B cell (primary cell): ENCODE measurements at regions of chr17 and their contacts with region 1.

Region 1: GRCh38 chr17:2416010-2416734 is 15.3 kb upstream of the MNT start:
- DNase-seq: peak; percentile 89
- ATAC-seq: peak; percentile 84
- H3K4me3 ChIP-seq: no peak overlapping the region
- H3K4me3 Mint-ChIP-seq: no peak overlapping the region
- H3K27ac ChIP-seq: no peak overlapping the region
- H3K27ac Mint-ChIP-seq: peak overlapping the region; percentile 46
- H3K4me1 ChIP-seq: no peaks in the 10 kb centered on the region
- H3K4me1 Mint-ChIP-seq: peaks cover 1% of the 10 kb centered on the region
- H3K27me3 ChIP-seq: no peaks in the 10 kb centered on the region
- H3K27me3 Mint-ChIP-seq: no peaks in the 10 kb centered on the region
- CTCF ChIP-seq: peak; percentile 99

Region 2: GRCh38 chr17:2336215-2336851 is 79.8 kb before region 1 on chr17 and contains the start of gene TSR1:
- CTCF ChIA-PET with region 1: interaction called, 21 read pairs
- POLR2A ChIA-PET with region 1: interaction called, 3 read pairs
- intact Hi-C with region 1: no loop called
- DNase-seq: peak; percentile 90
- ATAC-seq: peak; percentile 81
- H3K4me3 ChIP-seq: peak within 1 kb of the TSS; percentile 77 to 87 (median 82)
- H3K4me3 Mint-ChIP-seq: peak within 1 kb of the TSS; percentile 100
- H3K27ac ChIP-seq: peak within 1 kb of the TSS in 1 of 2 donors; percentile 64
- H3K27ac Mint-ChIP-seq: peak within 1 kb of the TSS; percentile 95
- H3K4me1 ChIP-seq: peaks cover 9 to 25% of the 10 kb centered on the region in 2 donors
- H3K4me1 Mint-ChIP-seq: peaks cover 24% of the 10 kb centered on the region
- H3K27me3 ChIP-seq: no peaks in the 10 kb centered on the region
- H3K27me3 Mint-ChIP-seq: no peaks in the 10 kb centered on the region
- CTCF ChIP-seq: no peak
- total RNA-seq, gene TSR1: 29.8 and 31.5 TPM in 2 replicates

Region 3: GRCh38 chr17:2386400-2387085 is 29.6 kb before region 1 on chr17:
- CTCF ChIA-PET with region 1: interaction called, 650 read pairs
- POLR2A ChIA-PET with region 1: interaction called, 12 read pairs
- intact Hi-C with region 1: no loop called
- DNase-seq: no peak
- ATAC-seq: no peak
- H3K4me3 ChIP-seq: no peak overlapping the region
- H3K4me3 Mint-ChIP-seq: no peak overlapping the region
- H3K27ac ChIP-seq: no peak overlapping the region
- H3K27ac Mint-ChIP-seq: no peak overlapping the region
- H3K4me1 ChIP-seq: peaks cover 14 to 21% of the 10 kb centered on the region in 2 donors
- H3K4me1 Mint-ChIP-seq: peaks cover 18% of the 10 kb centered on the region
- H3K27me3 ChIP-seq: no peaks in the 10 kb centered on the region
- H3K27me3 Mint-ChIP-seq: no peaks in the 10 kb centered on the region
- CTCF ChIP-seq: no peak

Region 4: GRCh38 chr17:2401426-2402221 is 14.5 kb before region 1 on chr17:
- CTCF ChIA-PET with region 1: interaction called, 76 read pairs
- POLR2A ChIA-PET with region 1: interaction called, 3 read pairs
- intact Hi-C with region 1: loop called (anchors 1 kb)
- DNase-seq: peak; percentile 96
- ATAC-seq: peak; percentile 57
- H3K4me3 ChIP-seq: peak overlapping the region; percentile 64 to 99 (median 94)
- H3K4me3 Mint-ChIP-seq: peak overlapping the region; percentile 99
- H3K27ac ChIP-seq: peak overlapping the region; percentile 95 to 98
- H3K27ac Mint-ChIP-seq: peak overlapping the region; percentile 99
- H3K4me1 ChIP-seq: peaks cover 32 to 36% of the 10 kb centered on the region in 2 donors
- H3K4me1 Mint-ChIP-seq: peaks cover 38% of the 10 kb centered on the region
- H3K27me3 ChIP-seq: no peaks in the 10 kb centered on the region
- H3K27me3 Mint-ChIP-seq: no peaks in the 10 kb centered on the region
- CTCF ChIP-seq: no peak

Region 5: DNA sequence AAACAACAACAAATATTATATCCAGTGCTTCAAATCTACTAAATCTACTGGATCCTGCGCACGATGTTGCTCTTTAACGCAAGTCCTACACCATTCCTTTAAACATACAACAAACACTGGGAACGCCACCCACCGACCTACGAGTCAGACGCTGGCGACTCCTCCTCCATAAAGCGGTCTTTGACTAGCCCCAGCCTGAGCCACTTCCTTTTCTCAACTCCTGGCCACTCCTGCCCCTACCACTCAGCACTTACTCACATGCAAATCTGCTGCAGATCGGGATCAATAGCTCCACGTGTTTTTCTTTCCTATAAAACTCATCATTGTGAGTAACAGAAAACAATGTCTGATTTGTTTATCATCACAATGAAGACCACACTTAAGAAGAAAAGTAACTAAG is 17.5 kb after region 1 on chr17:
- CTCF ChIA-PET with region 1: interaction called, 11 read pairs
- POLR2A ChIA-PET with region 1: no interaction called
- intact Hi-C with region 1: no loop called
- DNase-seq: no peak
- ATAC-seq: no peak
- H3K4me3 ChIP-seq: no peak overlapping the region
- H3K4me3 Mint-ChIP-seq: no peak overlapping the region
- H3K27ac ChIP-seq: no peak overlapping the region
- H3K27ac Mint-ChIP-seq: no peak overlapping the region
- H3K4me1 ChIP-seq: no peaks in the 10 kb centered on the region
- H3K4me1 Mint-ChIP-seq: no peaks in the 10 kb centered on the region
- H3K27me3 ChIP-seq: no peaks in the 10 kb centered on the region
- H3K27me3 Mint-ChIP-seq: no peaks in the 10 kb centered on the region
- CTCF ChIP-seq: no peak

Region 6: DNA sequence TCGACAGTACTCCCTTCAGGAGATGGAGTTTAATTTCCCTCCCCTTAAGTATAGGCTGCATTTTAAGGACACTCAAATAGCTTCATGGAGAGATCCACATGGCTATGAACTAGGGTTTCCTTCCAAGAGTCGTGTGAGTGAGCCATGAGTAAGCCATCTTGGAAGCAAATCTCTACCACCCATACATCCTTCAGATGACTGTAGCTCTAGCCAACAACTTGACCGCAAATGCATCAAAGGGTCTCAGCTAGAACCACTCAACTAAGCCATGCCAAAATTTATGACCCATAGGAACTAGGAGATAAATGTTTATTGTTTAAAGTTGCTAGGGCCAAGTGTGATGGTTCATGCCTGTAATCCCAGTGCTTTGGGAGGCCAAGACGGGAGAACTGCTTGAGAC is 52.1 kb after region 1 on chr17:
- CTCF ChIA-PET with region 1: no interaction called
- POLR2A ChIA-PET with region 1: no interaction called
- intact Hi-C with region 1: no loop called
- DNase-seq: no peak
- ATAC-seq: no peak
- H3K4me3 ChIP-seq: no peak overlapping the region
- H3K4me3 Mint-ChIP-seq: no peak overlapping the region
- H3K27ac ChIP-seq: no peak overlapping the region
- H3K27ac Mint-ChIP-seq: no peak overlapping the region
- H3K4me1 ChIP-seq: no peaks in the 10 kb centered on the region
- H3K4me1 Mint-ChIP-seq: no peaks in the 10 kb centered on the region
- H3K27me3 ChIP-seq: no peaks in the 10 kb centered on the region
- H3K27me3 Mint-ChIP-seq: no peaks in the 10 kb centered on the region
- CTCF ChIP-seq: no peak

Region 7: DNA sequence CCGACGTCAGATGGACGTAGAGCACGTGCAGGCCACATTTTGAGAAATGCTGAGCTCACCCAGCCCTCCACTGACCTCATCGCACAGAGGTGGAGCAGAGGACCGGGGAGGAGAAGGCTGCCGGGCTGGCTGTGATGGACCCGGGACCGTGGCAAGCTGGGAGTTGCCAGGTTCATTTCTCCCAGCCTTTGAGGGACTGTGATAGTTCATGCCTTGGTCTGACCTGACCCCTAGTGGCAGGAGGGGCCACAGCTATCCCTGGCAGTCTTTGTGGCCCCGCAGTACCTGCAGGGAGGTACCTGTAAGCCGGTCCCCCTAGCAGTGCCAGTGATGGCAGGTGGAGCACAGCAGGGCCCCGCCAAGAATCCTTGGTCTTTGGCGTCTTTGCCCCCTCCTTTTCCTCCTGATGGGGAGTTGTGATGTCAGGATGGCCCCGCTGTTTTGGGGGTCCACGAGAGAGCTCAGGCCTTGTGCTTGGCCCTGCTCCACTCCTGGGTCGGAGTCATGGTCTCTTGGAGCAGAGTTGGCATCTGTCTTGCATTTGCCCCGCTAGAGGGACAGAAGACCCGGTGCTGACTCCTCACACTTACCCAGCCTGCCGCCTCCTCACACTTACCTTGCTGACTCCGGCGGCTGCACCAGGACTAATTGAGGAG is 596.9 kb after region 1 on chr17:
- CTCF ChIA-PET with region 1: interaction called, 5 read pairs
- POLR2A ChIA-PET with region 1: no interaction called
- intact Hi-C with region 1: loop called (anchors 5 kb)
- DNase-seq: peak; percentile 78
- ATAC-seq: peak; percentile 96
- H3K4me3 ChIP-seq: no peak overlapping the region
- H3K4me3 Mint-ChIP-seq: no peak overlapping the region
- H3K27ac ChIP-seq: no peak overlapping the region
- H3K27ac Mint-ChIP-seq: peak overlapping the region; percentile 41
- H3K4me1 ChIP-seq: no peaks in the 10 kb centered on the region
- H3K4me1 Mint-ChIP-seq: peaks cover 3% of the 10 kb centered on the region
- H3K27me3 ChIP-seq: no peaks in the 10 kb centered on the region
- H3K27me3 Mint-ChIP-seq: no peaks in the 10 kb centered on the region
- CTCF ChIP-seq: peak; percentile 84